ENCODE measurements at regions of chr9 and their contacts with region 1.

Region 1: DNA sequence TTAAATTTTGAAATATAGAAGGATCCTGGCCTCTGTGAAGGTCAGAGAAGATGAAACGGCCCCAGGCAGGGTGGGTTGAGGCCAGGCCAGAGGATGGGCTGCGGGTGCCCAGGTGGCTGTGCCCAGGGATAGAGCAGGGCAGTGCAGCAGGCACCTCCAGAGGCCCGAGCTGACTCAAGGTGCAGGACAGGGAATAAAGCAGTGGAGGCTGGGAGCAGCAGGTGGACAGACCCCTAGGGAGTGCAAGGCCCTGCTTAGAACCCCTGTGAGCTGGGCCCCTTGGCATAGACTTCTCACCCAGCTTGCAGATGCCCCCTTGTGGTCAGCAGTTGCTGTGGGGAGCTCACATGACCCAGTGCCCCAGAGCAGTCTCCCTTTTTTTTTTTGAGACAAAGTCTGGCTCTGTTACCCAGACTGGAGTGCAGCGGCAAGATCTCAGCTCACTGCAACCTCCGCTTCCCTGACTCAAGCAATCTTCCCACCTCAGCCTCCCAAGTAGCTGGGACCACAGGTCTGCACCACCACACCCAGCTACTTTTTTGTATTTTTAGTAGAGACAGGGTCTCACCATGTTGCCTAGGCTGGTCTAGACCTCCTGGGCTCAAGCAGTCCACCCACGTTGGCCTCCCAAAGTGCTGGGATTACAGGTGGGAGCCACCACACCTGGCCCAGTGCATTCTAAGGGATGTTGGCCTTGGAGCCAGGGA is 118.8 kb downstream of the WNK2 start:
- DNase-seq: peak; percentile 45 to 70 (median 51)
- H3K4me3 ChIP-seq: no peak overlapping the region
- H3K27ac ChIP-seq: no peak overlapping the region
- H3K4me1 ChIP-seq: no peaks in the 10 kb centered on the region
- H3K27me3 ChIP-seq: no peaks in the 10 kb centered on the region
- CTCF ChIP-seq: peak; percentile 52

Region 2: GRCh38 chr9:93173365-93174051 is 129.2 kb before region 1 on chr9:
- intact Hi-C with region 1: loop called (anchors 10 kb)
- DNase-seq: peak in 1 of 5 donors; percentile 25
- H3K4me3 ChIP-seq: no peak overlapping the region
- H3K27ac ChIP-seq: no peak overlapping the region
- H3K4me1 ChIP-seq: no peaks in the 10 kb centered on the region
- H3K27me3 ChIP-seq: no peaks in the 10 kb centered on the region
- CTCF ChIP-seq: no peak

Measured in kidney (tissue), 22 donors.